PC-9 (cell line): ENCODE measurements at regions of chr1 and their contacts with region 1.

Region 1: GRCh38 chr1:222009105-222009730 is 267.3 kb upstream of the DUSP10 start:
- DNase-seq: peak in 1 of 2 experiments; percentile 19
- H3K4me3 ChIP-seq: no peak overlapping the region
- H3K27ac ChIP-seq: no peak overlapping the region
- H3K4me1 ChIP-seq: peaks cover 4% of the 10 kb centered on the region
- H3K27me3 ChIP-seq: no peaks in the 10 kb centered on the region
- CTCF ChIP-seq: peak; percentile 56

Region 2: DNA sequence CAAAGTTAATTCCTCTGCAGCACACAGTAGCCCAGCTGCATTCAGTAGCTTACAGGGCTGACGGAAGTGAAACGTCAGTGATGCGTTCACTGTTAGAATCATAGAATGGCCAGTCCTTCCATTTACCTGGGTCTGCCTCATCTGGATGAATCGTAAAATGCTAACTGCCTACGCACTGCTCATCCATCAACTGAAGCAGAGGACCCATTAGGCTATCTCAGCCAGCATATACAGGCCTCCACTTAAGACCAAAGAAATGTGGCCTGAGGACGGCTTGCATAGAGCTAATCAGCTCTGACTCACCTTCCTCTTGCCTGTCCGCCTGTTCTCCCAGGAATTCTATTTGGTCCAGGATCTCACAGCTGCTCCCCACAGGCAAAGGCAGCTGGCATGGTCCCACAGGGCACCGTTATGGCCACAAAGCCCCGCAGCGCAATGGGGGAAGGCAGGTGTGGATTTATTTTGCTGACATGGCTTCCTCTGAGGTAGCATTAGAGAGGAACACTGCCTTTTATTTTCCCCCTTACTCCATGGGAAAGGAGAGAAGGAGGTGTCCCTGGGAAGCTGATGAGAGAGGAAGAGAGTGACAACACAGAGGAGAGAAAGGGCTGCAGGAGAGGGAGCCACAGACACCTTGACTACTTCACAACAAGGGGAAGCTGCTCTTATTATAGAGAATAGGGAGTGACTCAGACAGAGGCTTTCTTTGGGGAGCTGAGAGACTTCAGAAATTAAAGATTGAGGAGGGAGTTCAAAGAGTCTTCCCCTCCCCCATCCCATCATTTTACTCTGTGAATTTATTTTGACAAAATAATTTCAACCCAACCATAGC is 361.1 kb after region 1 on chr1:
- CTCF ChIA-PET with region 1: no interaction called
- POLR2A ChIA-PET with region 1: interaction called, 16 read pairs
- intact Hi-C with region 1: no loop called
- DNase-seq: no peak
- H3K4me3 ChIP-seq: no peak overlapping the region
- H3K27ac ChIP-seq: no peak overlapping the region
- H3K4me1 ChIP-seq: peaks cover 16% of the 10 kb centered on the region
- H3K27me3 ChIP-seq: 0 out of 2 replicates have a peak, but pooled peaks cover 5% of the 10 kb centered on the region
- CTCF ChIP-seq: no peak